ENCODE measurements at regions of chr1 and their contacts with region 1.

Region 1: GRCh38 chr1:41416552-41417334 is 55.5 kb downstream of the FOXO6 start:
- DNase-seq: peak; percentile 5
- ATAC-seq: peak; percentile 93
- H3K4me3 ChIP-seq: no peak overlapping the region
- H3K27ac ChIP-seq: no peak overlapping the region
- H3K4me1 ChIP-seq: no peaks in the 10 kb centered on the region
- H3K27me3 ChIP-seq: no peaks in the 10 kb centered on the region; a peak in 1 of 4 replicates
- CTCF ChIP-seq: peak; percentile 92 to 95 (median 94); a peak in 5 of 6 replicates
- EP300 ChIP-seq: no peak
- POLR2A ChIP-seq: no peak
- RAD21 ChIP-seq: peak; percentile 90

Region 2: GRCh38 chr1:41282679-41283317 is 133.9 kb before region 1 on chr1:
- CTCF ChIA-PET with region 1: interaction called, 80 read pairs
- POLR2A ChIA-PET with region 1: no interaction called
- RAD21 ChIA-PET with region 1: interaction called, 15 read pairs
- SMC1A ChIA-PET with region 1: interaction called, 6 read pairs
- in situ Hi-C with region 1: no loop called
- intact Hi-C with region 1: loop called (anchors 1 kb)
- DNase-seq: no peak
- ATAC-seq: peak; percentile 88
- H3K4me3 ChIP-seq: no peak overlapping the region
- H3K27ac ChIP-seq: no peak overlapping the region
- H3K4me1 ChIP-seq: no peaks in the 10 kb centered on the region
- H3K27me3 ChIP-seq: peaks cover 2 to 4% of the 10 kb centered on the region in 2 experiments; a peak in 1 of 4 replicates
- CTCF ChIP-seq: peak; percentile 79 to 94 (median 88)
- EP300 ChIP-seq: no peak
- POLR2A ChIP-seq: no peak
- RAD21 ChIP-seq: peak; percentile 72

Region 3: GRCh38 chr1:41322835-41323627 is 93.7 kb before region 1 on chr1:
- CTCF ChIA-PET with region 1: interaction called, 261 read pairs
- POLR2A ChIA-PET with region 1: no interaction called
- RAD21 ChIA-PET with region 1: interaction called, 132 read pairs
- SMC1A ChIA-PET with region 1: interaction called, 114 read pairs
- in situ Hi-C with region 1: loop called (anchors 5 kb)
- intact Hi-C with region 1: loop called (anchors 1 kb)
- DNase-seq: no peak
- ATAC-seq: peak; percentile 99
- H3K4me3 ChIP-seq: no peak overlapping the region
- H3K27ac ChIP-seq: no peak overlapping the region
- H3K4me1 ChIP-seq: peaks cover 4% of the 10 kb centered on the region
- H3K27me3 ChIP-seq: no peaks in the 10 kb centered on the region
- CTCF ChIP-seq: peak; percentile 71 to 92 (median 78)
- EP300 ChIP-seq: no peak
- POLR2A ChIP-seq: no peak
- RAD21 ChIP-seq: peak; percentile 74

Region 4: DNA sequence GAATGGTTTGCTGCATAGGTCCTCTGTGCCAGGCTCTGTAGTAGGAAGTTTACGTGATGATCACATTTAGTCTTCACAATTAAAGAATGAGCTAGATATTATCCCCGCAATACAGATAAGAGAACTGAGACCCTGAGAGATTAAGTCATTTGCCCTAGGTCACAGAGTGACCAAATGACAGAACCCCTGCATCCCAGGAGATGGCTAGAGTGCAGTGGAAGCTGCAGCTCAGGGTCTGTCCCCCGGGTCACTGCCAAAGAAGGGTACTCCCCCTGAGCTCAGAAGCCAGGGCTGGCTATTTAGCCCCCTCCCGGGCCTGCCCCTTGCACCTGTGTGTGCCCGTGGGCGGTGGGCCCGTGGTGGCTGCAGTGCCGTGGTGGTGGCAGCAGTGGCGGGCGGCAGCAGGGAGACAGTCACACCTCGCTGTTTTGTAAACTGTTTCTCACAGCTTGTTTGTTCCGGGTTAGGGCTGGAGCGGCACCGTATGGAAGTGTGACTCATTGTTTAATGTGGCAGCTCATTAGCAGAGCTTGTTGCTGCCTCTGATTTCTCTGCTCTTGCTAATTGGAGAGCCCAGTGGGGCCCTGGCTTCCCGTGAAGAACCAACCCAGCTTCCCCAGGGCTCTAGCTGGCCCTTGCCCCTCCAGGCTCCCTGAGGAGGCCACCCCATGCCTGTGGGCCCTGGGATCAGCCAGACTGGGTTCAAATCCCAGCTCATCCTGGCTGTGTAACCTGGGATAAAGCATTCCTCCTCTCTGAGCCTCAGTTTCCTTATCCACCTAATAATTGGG is 74.8 kb before region 1 on chr1:
- CTCF ChIA-PET with region 1: interaction called, 14 read pairs
- POLR2A ChIA-PET with region 1: no interaction called
- RAD21 ChIA-PET with region 1: interaction called, 5 read pairs
- SMC1A ChIA-PET with region 1: interaction called, 3 read pairs
- in situ Hi-C with region 1: no loop called
- intact Hi-C with region 1: no loop called
- DNase-seq: no peak
- ATAC-seq: no peak
- H3K4me3 ChIP-seq: no peak overlapping the region
- H3K27ac ChIP-seq: no peak overlapping the region
- H3K4me1 ChIP-seq: peaks cover 9% of the 10 kb centered on the region
- H3K27me3 ChIP-seq: no peaks in the 10 kb centered on the region
- CTCF ChIP-seq: no peak
- EP300 ChIP-seq: no peak
- POLR2A ChIP-seq: no peak
- RAD21 ChIP-seq: no peak

Region 5: DNA sequence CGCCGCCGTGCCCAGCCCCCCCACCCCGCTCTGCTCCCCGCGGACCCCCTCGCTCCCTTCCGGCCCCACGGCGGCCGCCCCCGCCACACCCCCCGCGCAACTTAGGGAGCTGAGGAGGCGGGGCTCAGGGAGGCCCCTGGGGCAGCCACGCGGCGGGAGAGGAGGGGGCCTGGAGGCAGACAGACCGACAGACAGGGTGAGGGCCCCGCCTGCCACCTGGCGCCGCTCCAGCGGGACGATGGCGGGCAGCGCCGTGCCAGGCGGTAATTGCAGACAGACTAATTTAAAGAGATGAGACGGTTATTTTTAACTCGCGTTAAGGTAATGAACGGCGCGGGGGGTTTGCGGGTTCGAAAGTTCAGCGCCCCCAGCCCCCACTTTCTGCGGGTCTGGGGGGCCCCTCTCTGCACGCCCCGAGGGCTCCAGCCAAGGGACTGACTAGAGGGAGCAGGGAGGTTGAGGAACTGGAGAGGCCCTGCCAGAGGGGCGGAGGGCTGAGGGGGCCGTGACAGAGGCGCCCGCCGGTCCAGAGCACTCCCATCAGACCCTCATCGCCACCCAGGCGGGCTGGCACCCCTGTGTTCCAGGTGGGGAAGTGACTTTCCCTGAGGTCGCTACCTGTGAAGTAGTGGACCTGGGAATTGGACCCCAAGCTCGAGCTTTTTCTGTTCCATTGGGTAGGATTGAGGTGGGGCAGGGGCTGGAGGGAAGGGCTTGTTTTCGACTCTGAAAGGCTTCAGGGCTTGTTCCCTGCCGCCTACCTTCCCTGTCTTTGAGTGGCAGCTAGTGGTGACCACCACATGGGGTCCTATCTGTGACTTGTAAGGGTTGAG is 50.1 kb before region 1 on chr1:
- CTCF ChIA-PET with region 1: interaction called, 14 read pairs
- POLR2A ChIA-PET with region 1: no interaction called
- RAD21 ChIA-PET with region 1: interaction called, 15 read pairs
- SMC1A ChIA-PET with region 1: interaction called, 4 read pairs
- in situ Hi-C with region 1: no loop called
- intact Hi-C with region 1: no loop called
- DNase-seq: no peak
- ATAC-seq: peak; percentile 62
- H3K4me3 ChIP-seq: peak overlapping the region; percentile 65
- H3K27ac ChIP-seq: no peak overlapping the region
- H3K4me1 ChIP-seq: peaks cover 12% of the 10 kb centered on the region
- H3K27me3 ChIP-seq: peaks cover 10 to 18% of the 10 kb centered on the region in 2 experiments; a peak in 3 of 4 replicates
- CTCF ChIP-seq: no peak
- EP300 ChIP-seq: no peak
- POLR2A ChIP-seq: no peak
- RAD21 ChIP-seq: no peak

Measured in GM12878 (cell line).